ENCODE measurements at regions of chr9 and their contacts with region 1.

Region 1: DNA sequence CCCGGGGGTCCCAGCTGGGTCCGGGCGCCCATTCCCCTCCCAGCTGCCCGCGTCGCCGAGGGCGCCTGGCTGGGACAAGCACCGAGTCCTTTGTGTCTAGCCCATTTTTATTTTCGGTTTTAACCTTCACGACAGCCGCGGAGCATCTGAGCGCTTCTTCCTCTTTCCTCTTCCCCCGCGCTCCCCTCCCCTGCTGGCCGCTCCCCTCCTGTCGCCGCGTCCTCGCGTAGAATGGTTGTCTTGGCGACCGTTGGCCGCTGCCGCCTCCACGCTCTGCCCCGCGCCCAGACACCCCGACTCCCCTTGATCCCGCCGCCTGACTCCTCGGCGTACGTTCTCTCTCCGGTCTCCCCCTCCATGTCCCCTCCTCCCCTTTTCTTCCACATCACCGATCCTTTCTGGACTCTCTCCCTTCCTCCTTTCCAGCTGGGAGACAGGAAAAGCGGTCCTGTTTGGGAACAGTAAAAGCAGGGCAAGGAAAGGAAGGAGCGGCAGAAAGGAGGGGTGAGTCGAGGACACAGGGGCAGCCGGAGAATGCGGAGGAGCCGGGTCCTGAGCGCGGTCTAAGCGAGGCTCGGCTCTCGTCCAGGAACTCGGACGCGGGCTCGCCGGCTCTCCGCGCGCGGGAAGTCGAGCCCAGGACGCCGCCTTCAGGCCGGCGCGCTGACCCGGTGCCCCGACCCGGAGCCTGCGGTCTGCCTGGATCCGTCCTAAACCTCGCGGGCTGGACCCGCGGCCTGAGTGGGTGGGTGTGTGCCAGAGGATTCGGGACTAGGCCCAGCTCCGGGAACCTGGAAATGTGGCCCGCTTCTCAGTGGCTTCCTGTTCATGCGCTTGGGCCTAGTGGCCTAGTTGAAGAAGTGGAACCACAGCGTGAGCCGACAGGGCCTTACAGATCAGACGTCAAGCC is 841 bp downstream of the CDKN2B-AS1 start:
- DNase-seq: peak; percentile 82
- ATAC-seq: peak; percentile 84
- H3K4me3 Mint-ChIP-seq: peak overlapping the region; percentile 98
- H3K27ac Mint-ChIP-seq: peak overlapping the region; percentile 97
- H3K4me1 Mint-ChIP-seq: peaks cover 24% of the 10 kb centered on the region
- H3K27me3 Mint-ChIP-seq: no peaks in the 10 kb centered on the region
- CTCF ChIP-seq: no peak

Region 2: GRCh38 chr9:21334701-21335632 is 660.5 kb before region 1 on chr9 and contains the start of gene KLHL9:
- CTCF ChIA-PET with region 1: no interaction called
- POLR2A ChIA-PET with region 1: no interaction called
- intact Hi-C with region 1: loop called (anchors 5 kb)
- DNase-seq: peak; percentile 76
- ATAC-seq: peak; percentile 88
- H3K4me3 Mint-ChIP-seq: peak within 1 kb of the TSS; percentile 91
- H3K27ac Mint-ChIP-seq: peak within 1 kb of the TSS; percentile 87
- H3K4me1 Mint-ChIP-seq: peaks cover 50% of the 10 kb centered on the region
- H3K27me3 Mint-ChIP-seq: peaks cover 7% of the 10 kb centered on the region
- CTCF ChIP-seq: no peak
- total RNA-seq, gene KLHL9: 13.1 and 13.8 TPM in 2 replicates

Region 3: GRCh38 chr9:21802195-21803000 is 193.0 kb before region 1 on chr9 and contains the start of gene MTAP:
- CTCF ChIA-PET with region 1: no interaction called
- POLR2A ChIA-PET with region 1: interaction called, 14 read pairs
- intact Hi-C with region 1: loop called (anchors 1 kb)
- DNase-seq: peak; percentile 68
- ATAC-seq: peak; percentile 88
- H3K4me3 Mint-ChIP-seq: peak within 1 kb of the TSS; percentile 99
- H3K27ac Mint-ChIP-seq: peak within 1 kb of the TSS; percentile 91
- H3K4me1 Mint-ChIP-seq: peaks cover 53% of the 10 kb centered on the region
- H3K27me3 Mint-ChIP-seq: peaks cover 15% of the 10 kb centered on the region
- CTCF ChIP-seq: no peak
- total RNA-seq, gene MTAP: 30.4 and 43.2 TPM in 2 replicates

Region 4: GRCh38 chr9:21831961-21832509 is 163.4 kb before region 1 on chr9:
- CTCF ChIA-PET with region 1: no interaction called
- POLR2A ChIA-PET with region 1: interaction called, 10 read pairs
- intact Hi-C with region 1: loop called (anchors 1 kb)
- DNase-seq: no peak
- ATAC-seq: peak; percentile 54
- H3K4me3 Mint-ChIP-seq: peak overlapping the region; percentile 40
- H3K27ac Mint-ChIP-seq: peak overlapping the region; percentile 86
- H3K4me1 Mint-ChIP-seq: peaks cover 59% of the 10 kb centered on the region
- H3K27me3 Mint-ChIP-seq: no peaks in the 10 kb centered on the region
- CTCF ChIP-seq: no peak

Region 5: GRCh38 chr9:21965401-21965951 is 30.0 kb before region 1 on chr9:
- CTCF ChIA-PET with region 1: no interaction called
- POLR2A ChIA-PET with region 1: no interaction called
- intact Hi-C with region 1: loop called (anchors 1 kb)
- DNase-seq: peak; percentile 41
- ATAC-seq: peak; percentile 67
- H3K4me3 Mint-ChIP-seq: peak overlapping the region; percentile 77
- H3K27ac Mint-ChIP-seq: peak overlapping the region; percentile 64
- H3K4me1 Mint-ChIP-seq: peaks cover 19% of the 10 kb centered on the region
- H3K27me3 Mint-ChIP-seq: peaks cover 74% of the 10 kb centered on the region
- CTCF ChIP-seq: no peak

Region 6: GRCh38 chr9:21974548-21975409 is 20.7 kb before region 1 on chr9:
- CTCF ChIA-PET with region 1: interaction called, 4 read pairs
- POLR2A ChIA-PET with region 1: no interaction called
- intact Hi-C with region 1: loop called (anchors 1 kb)
- DNase-seq: peak; percentile 39
- ATAC-seq: peak; percentile 59
- H3K4me3 Mint-ChIP-seq: peak overlapping the region; percentile 78
- H3K27ac Mint-ChIP-seq: peak overlapping the region; percentile 42
- H3K4me1 Mint-ChIP-seq: peaks cover 21% of the 10 kb centered on the region
- H3K27me3 Mint-ChIP-seq: peaks cover 72% of the 10 kb centered on the region
- CTCF ChIP-seq: no peak

Region 7: GRCh38 chr9:22244141-22245011 is 248.9 kb after region 1 on chr9:
- CTCF ChIA-PET with region 1: interaction called, 3 read pairs
- POLR2A ChIA-PET with region 1: interaction called, 5 read pairs
- intact Hi-C with region 1: loop called (anchors 1 kb)
- DNase-seq: no peak
- ATAC-seq: peak; percentile 54
- H3K4me3 Mint-ChIP-seq: no peak overlapping the region
- H3K27ac Mint-ChIP-seq: no peak overlapping the region
- H3K4me1 Mint-ChIP-seq: peaks cover 39% of the 10 kb centered on the region
- H3K27me3 Mint-ChIP-seq: peaks cover 15% of the 10 kb centered on the region
- CTCF ChIP-seq: no peak

Measured in activated B cell treated with CpG ODN at 0.5 μM for 24 hours (primary cell).